SK-N-SH (cell line): ENCODE measurements at regions of chr16 and their contacts with region 1.

Region 1: DNA sequence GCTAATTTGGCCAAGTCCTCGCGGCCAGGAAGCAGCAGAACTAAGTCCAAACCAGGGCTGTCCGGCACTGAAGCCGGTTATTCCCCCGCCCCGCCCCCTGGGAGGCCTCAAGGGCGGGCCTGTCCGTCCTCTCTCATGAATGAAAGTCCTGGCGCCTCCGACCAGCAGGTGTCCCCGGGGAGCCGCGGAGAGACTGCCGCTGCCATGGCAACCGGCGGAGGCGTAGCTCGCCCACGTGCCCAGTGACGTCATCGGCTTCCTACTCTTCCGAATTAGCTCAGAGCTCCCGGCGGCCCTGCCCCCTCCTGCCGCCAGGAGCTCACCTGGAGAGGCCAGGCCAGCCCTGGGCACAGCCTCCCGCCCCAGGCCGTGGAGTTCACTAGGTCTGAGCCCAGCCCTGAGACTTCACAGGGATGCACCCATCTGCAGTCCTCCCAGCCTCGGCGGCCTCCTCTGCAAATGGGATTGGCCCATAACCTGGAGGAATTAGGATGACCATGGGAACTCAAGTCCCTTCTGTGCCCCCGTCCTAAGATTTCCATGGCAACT is 1.3 kb downstream of the SPATA2L start:
- DNase-seq: peak; percentile 97
- H3K4me3 ChIP-seq: peak overlapping the region; percentile 78 to 79
- H3K27ac ChIP-seq: peak overlapping the region; percentile 71
- H3K4me1 ChIP-seq: peaks cover 9 to 29% of the 10 kb centered on the region in 2 experiments; a peak in 2 of 4 replicates
- H3K27me3 ChIP-seq: no peaks in the 10 kb centered on the region
- CTCF ChIP-seq: peak; percentile 69
- EP300 ChIP-seq: no peak
- RAD21 ChIP-seq: peak; percentile 73

Region 2: DNA sequence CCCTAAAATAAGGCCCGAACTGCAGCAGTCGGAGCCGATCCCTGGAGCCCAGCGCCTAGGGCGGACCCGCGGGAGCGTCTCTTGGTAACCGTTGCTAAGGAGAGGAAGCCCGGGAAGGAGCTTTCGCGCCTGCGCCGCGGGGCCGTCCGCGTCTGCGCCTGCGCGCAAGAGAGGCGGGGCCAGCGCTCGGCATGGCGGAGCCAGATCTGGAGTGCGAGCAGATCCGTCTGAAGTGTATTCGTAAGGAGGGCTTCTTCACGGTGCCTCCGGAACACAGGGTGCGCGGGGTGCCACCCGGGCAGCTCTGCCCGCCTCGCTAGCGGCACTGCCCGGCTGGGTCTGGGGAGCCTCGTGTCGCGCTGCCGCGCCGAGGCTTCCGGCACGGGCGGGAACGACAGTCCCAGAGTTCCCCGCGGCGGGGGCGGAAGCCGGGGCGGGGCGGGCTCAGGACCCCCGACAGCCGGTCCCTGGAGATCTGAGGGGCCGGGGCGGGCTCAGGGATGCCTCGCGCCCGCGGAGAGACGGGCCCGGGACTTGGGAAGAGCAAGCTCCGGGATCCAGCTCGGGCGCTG is 13.6 kb before region 1 on chr16 and contains the start of gene CDK10:
- CTCF ChIA-PET with region 1: interaction called, 22 read pairs
- POLR2A ChIA-PET with region 1: interaction called, 10 read pairs
- DNase-seq: peak; percentile 99
- H3K4me3 ChIP-seq: peak within 1 kb of the TSS; percentile 82 to 87
- H3K27ac ChIP-seq: peak within 1 kb of the TSS; percentile 86 to 96
- H3K4me1 ChIP-seq: peaks cover 4 to 7% of the 10 kb centered on the region in 2 experiments; a peak in 1 of 4 replicates
- H3K27me3 ChIP-seq: no peaks in the 10 kb centered on the region
- CTCF ChIP-seq: no peak
- EP300 ChIP-seq: no peak
- RAD21 ChIP-seq: no peak
- polyA plus RNA-seq, gene CDK10: 84.7 and 94.5 TPM in 2 replicates

Region 3: GRCh38 chr16:89711601-89712273 is 11.6 kb after region 1 on chr16:
- CTCF ChIA-PET with region 1: interaction called, 28 read pairs
- POLR2A ChIA-PET with region 1: interaction called, 7 read pairs
- DNase-seq: peak; percentile 100
- H3K4me3 ChIP-seq: peak overlapping the region; percentile 67 to 69
- H3K27ac ChIP-seq: peak overlapping the region; percentile 12 to 51; a peak in 3 of 4 replicates
- H3K4me1 ChIP-seq: no peaks in the 10 kb centered on the region; a peak in 1 of 4 replicates
- H3K27me3 ChIP-seq: no peaks in the 10 kb centered on the region
- CTCF ChIP-seq: no peak
- EP300 ChIP-seq: no peak
- RAD21 ChIP-seq: no peak

Region 4: GRCh38 chr16:89721546-89722391 is 21.6 kb after region 1 on chr16:
- CTCF ChIA-PET with region 1: interaction called, 11 read pairs
- POLR2A ChIA-PET with region 1: interaction called, 3 read pairs
- DNase-seq: peak; percentile 75
- H3K4me3 ChIP-seq: peak overlapping the region; percentile 74 to 92
- H3K27ac ChIP-seq: peak overlapping the region; percentile 79 to 92
- H3K4me1 ChIP-seq: peaks cover 21 to 25% of the 10 kb centered on the region in 2 experiments; a peak in 3 of 4 replicates
- H3K27me3 ChIP-seq: no peaks in the 10 kb centered on the region
- CTCF ChIP-seq: no peak
- EP300 ChIP-seq: no peak
- RAD21 ChIP-seq: no peak